Activated T-helper 2 cell treated with anti-CD3 and anti-CD28 coated beads, Interferon-gamma antibody, Interleukin-2, Interleukin-4, amounts not matched to agents 10 μg/mL and 5 μg/mL and 100 μg/mL, durations not matched to agents 14 hours and 24 hours and 36 hours (primary cell): ENCODE measurements at regions of chr11 and their contacts with region 1.

Region 1: DNA sequence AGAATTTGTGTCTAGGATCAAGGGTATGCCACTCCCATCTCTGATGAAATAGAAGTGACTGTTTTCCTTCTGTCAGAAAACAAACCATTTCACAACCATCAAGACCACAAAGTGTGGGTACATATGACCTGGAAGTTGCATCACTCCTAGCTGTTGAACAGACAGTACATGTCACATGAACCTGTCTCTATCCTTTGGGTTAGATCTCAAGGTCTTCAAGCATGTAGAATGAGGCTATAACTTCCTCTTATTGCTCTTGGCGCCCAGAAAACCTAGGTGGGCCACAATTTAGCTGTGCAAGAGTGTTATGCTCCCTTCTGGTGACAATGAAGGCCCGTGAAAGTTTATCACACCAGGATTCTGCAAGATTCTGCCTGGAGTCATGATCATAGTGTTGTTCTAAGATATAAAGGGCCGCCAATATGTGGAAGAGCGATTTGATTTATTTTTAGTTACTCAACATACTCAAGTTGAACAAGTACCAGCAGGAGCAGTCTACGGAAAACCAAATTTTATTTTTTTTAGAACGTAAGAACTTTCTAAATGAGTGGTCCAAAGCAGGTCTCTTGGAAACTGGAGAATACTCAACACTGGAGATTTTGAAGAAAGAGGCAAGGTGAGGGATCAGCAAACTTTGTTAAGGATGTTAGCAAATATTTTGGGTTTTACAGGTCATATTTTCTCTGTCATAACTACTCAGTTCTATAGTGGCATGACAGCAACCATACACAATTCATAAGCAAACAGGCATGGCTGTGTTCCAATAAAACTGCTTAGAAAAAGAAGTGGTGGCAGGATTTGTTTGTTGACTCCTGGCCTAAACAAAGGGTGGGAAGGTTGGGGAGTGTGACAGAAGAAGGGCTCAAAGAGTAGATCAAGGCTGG is 101.8 kb downstream of the USP35 start:
- DNase-seq: peak; percentile 37
- H3K4me3 Mint-ChIP-seq: peak overlapping the region; percentile 31
- H3K27ac Mint-ChIP-seq: peak overlapping the region; percentile 91
- H3K4me1 Mint-ChIP-seq: peaks cover 68% of the 10 kb centered on the region
- H3K27me3 Mint-ChIP-seq: no peaks in the 10 kb centered on the region

Region 2: GRCh38 chr11:78179459-78180069 is 111.0 kb before region 1 on chr11:
- intact Hi-C with region 1: no loop called
- DNase-seq: no peak
- H3K4me3 Mint-ChIP-seq: no peak overlapping the region
- H3K27ac Mint-ChIP-seq: no peak overlapping the region
- H3K4me1 Mint-ChIP-seq: peaks cover 8% of the 10 kb centered on the region
- H3K27me3 Mint-ChIP-seq: no peaks in the 10 kb centered on the region

Region 3: DNA sequence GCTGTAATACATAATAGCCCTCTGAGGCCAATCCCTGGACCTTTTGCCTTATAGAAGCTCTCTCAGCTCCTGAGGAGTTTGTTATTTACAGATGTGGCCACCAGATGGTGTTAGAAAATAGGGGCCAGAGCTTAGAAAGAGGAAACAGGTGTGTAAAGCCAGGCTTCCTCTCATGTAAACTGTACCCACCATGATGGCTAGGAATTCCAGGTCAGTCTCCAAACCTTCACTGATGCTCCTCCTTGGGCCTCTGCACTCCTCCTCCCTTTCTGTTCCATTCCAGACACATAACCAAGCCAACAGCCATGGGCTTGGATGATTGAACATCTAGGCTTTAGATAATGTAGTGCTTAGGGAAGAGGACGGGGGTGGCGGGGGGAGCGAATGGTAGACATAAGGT is 62.1 kb before region 1 on chr11:
- intact Hi-C with region 1: loop called (anchors 1 kb)
- DNase-seq: peak; percentile 30
- H3K4me3 Mint-ChIP-seq: no peak overlapping the region
- H3K27ac Mint-ChIP-seq: no peak overlapping the region
- H3K4me1 Mint-ChIP-seq: peaks cover 73% of the 10 kb centered on the region
- H3K27me3 Mint-ChIP-seq: no peaks in the 10 kb centered on the region

Region 4: DNA sequence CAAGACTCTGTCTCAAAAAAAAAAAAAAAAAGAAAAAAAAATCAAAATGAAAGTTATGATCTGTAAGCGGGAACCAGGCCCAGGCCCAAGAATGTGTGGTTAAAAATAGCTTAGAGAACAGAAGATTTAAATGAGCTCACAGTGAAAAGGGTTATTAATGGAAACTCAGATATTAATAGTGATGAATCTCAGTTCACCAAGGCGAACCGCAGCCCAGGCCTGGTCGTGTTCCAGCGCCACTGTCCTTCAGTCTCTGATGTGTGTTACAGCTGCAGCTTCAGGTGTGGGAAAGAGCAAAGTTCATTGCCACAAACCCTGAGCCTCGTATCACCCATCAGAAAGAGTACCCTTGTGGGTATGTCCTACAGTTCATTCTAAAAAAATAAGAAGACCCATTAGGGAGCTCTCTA is 20.0 kb after region 1 on chr11:
- intact Hi-C with region 1: loop called (anchors 1 kb)
- DNase-seq: no peak
- H3K4me3 Mint-ChIP-seq: peak overlapping the region; percentile 38
- H3K27ac Mint-ChIP-seq: peak overlapping the region; percentile 49
- H3K4me1 Mint-ChIP-seq: peaks cover 77% of the 10 kb centered on the region
- H3K27me3 Mint-ChIP-seq: no peaks in the 10 kb centered on the region

Region 5: DNA sequence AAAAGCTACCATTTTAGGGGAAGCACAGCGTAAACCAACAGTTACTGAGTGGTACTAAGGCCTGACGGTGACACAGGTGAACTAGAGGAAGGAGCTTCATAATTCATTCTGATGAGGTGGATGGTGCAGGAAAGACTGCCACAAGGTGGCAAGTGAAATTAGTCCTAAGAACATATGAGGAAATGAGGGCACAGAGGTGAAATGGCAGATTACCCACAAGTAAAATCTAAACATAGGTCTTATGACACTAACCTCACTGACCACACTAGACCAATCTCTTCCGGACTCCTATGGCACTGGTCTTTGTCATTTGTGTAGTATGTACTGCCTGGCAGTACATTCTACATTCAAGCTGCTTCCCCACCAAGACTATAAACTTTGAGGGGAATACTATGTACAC is 106.9 kb after region 1 on chr11:
- intact Hi-C with region 1: loop called (anchors 10 kb)
- DNase-seq: no peak
- H3K4me3 Mint-ChIP-seq: no peak overlapping the region
- H3K27ac Mint-ChIP-seq: peak overlapping the region; percentile 51
- H3K4me1 Mint-ChIP-seq: peaks cover 69% of the 10 kb centered on the region
- H3K27me3 Mint-ChIP-seq: no peaks in the 10 kb centered on the region

Region 6: DNA sequence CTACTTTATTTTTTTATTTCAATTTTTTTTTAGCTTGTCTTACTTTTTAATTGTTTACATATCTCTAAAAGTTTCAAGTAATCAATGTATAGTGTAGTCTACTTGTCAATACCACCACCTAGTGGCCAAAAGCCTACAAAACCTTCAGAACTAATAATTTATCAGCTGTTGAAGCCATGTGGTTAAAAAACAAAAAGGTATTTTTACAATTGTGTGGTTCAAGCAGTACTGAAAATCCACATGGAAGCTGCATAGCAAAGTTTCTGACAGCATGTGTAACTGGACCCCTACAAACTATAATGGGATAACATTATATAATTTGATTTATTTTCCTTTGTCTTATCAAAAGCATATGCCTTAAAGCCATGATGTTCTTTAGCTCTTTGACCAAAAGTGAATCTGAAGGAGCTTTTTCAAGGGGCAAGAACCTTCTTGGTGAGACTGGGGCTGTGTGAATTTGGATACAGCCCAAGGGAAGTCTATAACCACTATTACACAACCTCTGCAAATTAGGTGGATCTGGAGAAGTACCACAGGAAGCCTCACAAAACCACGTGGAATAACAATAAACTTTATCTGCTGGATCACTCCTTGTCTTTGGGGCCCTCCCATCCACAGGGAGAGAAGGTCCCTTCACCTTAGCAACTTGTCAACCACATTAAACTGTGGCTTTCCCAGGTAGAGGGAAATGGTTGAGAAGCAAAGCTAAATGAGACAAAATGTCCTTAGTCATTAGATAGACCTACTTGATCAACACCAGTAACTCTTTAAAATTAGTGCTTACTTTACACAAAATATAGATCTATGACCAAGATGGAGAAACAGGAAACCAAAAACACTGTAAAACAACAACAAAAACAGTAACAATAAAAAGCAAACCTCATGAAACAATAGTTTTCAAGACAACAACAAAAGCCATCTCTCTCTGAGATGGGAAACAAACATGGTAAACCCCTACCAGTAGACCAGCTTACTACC is 274.2 kb after region 1 on chr11:
- intact Hi-C with region 1: loop called (anchors 5 kb)
- DNase-seq: peak; percentile 26
- H3K4me3 Mint-ChIP-seq: no peak overlapping the region
- H3K27ac Mint-ChIP-seq: peak overlapping the region; percentile 76
- H3K4me1 Mint-ChIP-seq: peaks cover 53% of the 10 kb centered on the region
- H3K27me3 Mint-ChIP-seq: no peaks in the 10 kb centered on the region